ENCODE measurements at regions of chr12 and their contacts with region 1.

Region 1: GRCh38 chr12:122421821-122422729 is at the start of gene CLIP1:
- DNase-seq: peak; percentile 59 to 83
- H3K4me3 ChIP-seq: peak within 1 kb of the TSS; percentile 82 to 99
- H3K27ac ChIP-seq: peak within 1 kb of the TSS; percentile 97 to 99
- H3K4me1 ChIP-seq: peaks cover 0 to 50% (median 31%) of the 10 kb centered on the region in 4 donors
- H3K27me3 ChIP-seq: no peaks in the 10 kb centered on the region
- CTCF ChIP-seq: peak; percentile 45 to 49

Region 2: GRCh38 chr12:122382919-122383350 is 39.1 kb before region 1 on chr12:
- intact Hi-C with region 1: no loop called
- DNase-seq: no peak
- H3K4me3 ChIP-seq: no peak overlapping the region
- H3K27ac ChIP-seq: peak overlapping the region; percentile 28 to 34
- H3K4me1 ChIP-seq: peaks cover 0 to 24% (median 2%) of the 10 kb centered on the region in 4 donors
- H3K27me3 ChIP-seq: no peaks in the 10 kb centered on the region
- CTCF ChIP-seq: no peak

Region 3: GRCh38 chr12:122459211-122459610 is 37.1 kb after region 1 on chr12:
- intact Hi-C with region 1: loop called (anchors 5 kb)
- DNase-seq: peak in 1 of 2 donors; percentile 89
- H3K4me3 ChIP-seq: no peak overlapping the region
- H3K27ac ChIP-seq: peak overlapping the region; percentile 56 to 69
- H3K4me1 ChIP-seq: peaks cover 0 to 51% (median 0%) of the 10 kb centered on the region in 4 donors
- H3K27me3 ChIP-seq: no peaks in the 10 kb centered on the region
- CTCF ChIP-seq: no peak

Measured in tibial artery (tissue), 4 donors.